Spleen (tissue), 13 donors: ENCODE measurements at regions of chr20 and their contacts with region 1.

Region 1: GRCh38 chr20:1325173-1326030 is 3.5 kb downstream of the SDCBP2 start:
- DNase-seq: peak; percentile 99
- H3K4me3 ChIP-seq: peak overlapping the region; percentile 59 to 90 (median 76)
- H3K27ac ChIP-seq: peak overlapping the region; percentile 94 to 99 (median 97)
- H3K4me1 ChIP-seq: peaks cover 39 to 80% (median 67%) of the 10 kb centered on the region in 6 donors
- H3K27me3 ChIP-seq: no peaks in the 10 kb centered on the region
- CTCF ChIP-seq: peak; percentile 27 to 66 (median 52)
- POLR2A ChIP-seq: peak; percentile 5 to 78 (median 62)

Region 2: GRCh38 chr20:982754-983153 is 342.6 kb before region 1 on chr20:
- intact Hi-C with region 1: no loop called
- DNase-seq: no peak
- H3K4me3 ChIP-seq: no peak overlapping the region
- H3K27ac ChIP-seq: no peak overlapping the region
- H3K4me1 ChIP-seq: no peaks in the 10 kb centered on the region
- H3K27me3 ChIP-seq: peaks cover 0 to 57% (median 0%) of the 10 kb centered on the region in 7 donors
- CTCF ChIP-seq: no peak
- POLR2A ChIP-seq: no peak

Region 3: DNA sequence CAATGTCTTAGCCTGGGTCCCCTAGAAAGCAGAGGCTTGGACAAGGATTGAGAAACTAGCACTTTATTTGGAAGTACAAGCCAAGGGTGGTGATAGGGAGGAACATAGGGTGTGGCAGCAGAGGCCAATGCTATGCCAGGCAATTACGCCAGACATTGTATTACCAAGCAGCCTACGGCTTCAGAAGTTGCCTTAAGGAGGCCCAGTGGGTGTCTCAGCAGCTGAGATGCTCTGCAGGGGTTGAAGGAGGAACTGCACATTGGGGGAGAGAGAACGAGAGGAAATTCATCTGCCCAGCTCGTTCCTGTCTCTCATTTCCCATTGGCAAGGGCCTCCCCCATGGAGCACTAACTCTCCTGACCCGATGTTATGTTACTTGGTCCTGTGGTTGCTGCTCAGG is 121.3 kb before region 1 on chr20:
- intact Hi-C with region 1: no loop called
- DNase-seq: no peak
- H3K4me3 ChIP-seq: no peak overlapping the region
- H3K27ac ChIP-seq: no peak overlapping the region
- H3K4me1 ChIP-seq: no peaks in the 10 kb centered on the region
- H3K27me3 ChIP-seq: peaks cover 0 to 4% (median 0%) of the 10 kb centered on the region in 7 donors
- CTCF ChIP-seq: no peak
- POLR2A ChIP-seq: no peak

Region 4: GRCh38 chr20:1392823-1393506 is 67.6 kb after region 1 on chr20 and contains the start of gene FKBP1A:
- intact Hi-C with region 1: loop called (anchors 5 kb)
- DNase-seq: peak; percentile 97
- H3K4me3 ChIP-seq: peak within 1 kb of the TSS; percentile 71 to 99 (median 94)
- H3K27ac ChIP-seq: peak within 1 kb of the TSS; percentile 75 to 97 (median 92)
- H3K4me1 ChIP-seq: peaks cover 42 to 94% (median 72%) of the 10 kb centered on the region in 6 donors
- H3K27me3 ChIP-seq: no peaks in the 10 kb centered on the region
- CTCF ChIP-seq: peak in 9 of 11 experiments; percentile 4 to 58 (median 41)
- POLR2A ChIP-seq: peak in 1 of 3 donors; percentile 64
- total RNA-seq, gene FKBP1A: 167 to 338 (median 260) TPM